ENCODE measurements at regions of chr15 and their contacts with region 1.

Region 1: DNA sequence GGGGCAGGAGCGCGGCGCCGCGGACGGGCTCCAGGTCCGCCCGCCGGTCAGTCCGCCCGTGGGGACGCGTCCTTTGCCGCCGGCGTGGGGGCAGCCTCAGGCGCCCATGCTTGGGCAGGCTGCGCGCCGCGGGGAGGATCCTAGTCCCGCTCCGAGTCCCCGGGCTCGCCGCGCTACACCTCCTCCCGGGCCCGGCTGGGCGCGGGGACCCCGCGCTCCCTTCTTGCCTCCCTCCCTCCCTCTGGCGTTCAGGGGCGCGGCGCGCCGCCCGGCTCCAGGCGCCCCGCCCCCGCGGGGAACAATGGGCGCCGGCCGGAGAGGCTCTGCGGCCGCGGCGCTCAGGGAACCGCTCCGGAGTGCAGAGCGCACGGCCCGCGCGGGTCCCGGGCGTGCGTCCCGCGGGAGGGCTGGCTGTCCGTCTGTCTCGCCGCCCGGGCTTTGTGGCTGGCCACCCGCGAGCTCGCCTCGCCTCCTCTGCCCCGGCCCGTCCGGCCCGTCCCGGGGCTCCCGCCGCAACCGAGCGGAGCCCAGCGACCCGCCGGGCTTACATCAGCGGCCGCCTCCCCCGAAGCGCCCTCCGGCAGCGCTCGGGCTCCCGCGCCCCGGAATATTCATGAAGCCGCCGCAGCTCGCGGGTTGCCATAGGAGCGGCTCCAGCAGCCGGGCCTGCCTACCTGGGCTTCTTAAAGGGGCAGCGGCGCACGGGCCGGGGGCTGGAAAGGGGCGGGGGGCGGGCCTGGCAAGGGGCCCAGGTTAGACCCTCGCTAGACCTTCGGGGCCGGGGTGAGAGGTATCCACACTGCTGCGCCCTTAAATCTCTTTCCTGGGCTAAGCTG is at the start of gene HCN4:
- DNase-seq: no peak
- ATAC-seq: peak; percentile 77
- total RNA-seq, gene HCN4: 21.4 TPM

Region 2: DNA sequence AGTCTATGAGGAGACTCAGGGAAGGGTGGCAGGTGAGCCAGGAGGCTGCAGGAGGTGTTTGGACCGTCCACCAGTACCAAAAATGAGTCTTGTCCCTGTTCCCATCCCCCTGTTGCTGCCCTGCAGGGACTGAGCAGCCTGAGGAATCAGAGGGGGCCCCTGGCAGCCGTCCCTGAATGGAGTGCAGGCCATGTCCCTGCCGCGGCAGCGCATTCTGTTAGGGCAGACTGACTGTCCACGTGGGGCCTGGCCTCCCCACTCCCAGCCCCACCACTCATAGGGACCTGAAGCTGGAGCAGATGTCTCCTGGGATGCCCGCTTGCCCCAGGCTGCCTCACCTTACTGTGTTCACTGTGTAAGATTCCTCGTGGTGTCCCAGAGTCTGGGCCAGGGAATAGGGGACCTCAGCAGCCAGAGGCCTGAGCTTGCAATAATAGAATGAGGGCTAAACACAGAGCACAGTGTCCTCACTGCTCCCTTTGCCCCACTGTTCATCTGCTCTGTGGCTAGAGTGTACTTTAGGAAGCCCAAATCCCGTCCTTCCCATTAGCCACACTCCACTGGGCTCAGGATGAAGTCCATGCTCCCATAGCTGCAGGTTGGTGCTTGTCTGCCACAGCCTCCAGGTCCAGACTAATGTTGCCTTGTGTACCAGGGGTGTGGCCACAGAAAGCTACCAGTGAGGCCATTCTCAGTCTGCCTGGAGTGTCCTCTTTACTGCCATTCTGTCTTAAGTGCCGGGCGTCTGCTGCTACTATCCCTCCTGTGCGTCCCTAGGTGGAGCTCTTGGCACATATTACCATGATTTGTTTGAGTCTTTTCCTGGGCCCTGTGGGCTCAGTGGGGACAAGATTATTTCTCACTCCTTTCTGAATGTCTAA is 62.9 kb before region 1 on chr15:
- intact Hi-C with region 1: loop called (anchors 5 kb)
- DNase-seq: no peak
- ATAC-seq: peak; percentile 79

Region 3: DNA sequence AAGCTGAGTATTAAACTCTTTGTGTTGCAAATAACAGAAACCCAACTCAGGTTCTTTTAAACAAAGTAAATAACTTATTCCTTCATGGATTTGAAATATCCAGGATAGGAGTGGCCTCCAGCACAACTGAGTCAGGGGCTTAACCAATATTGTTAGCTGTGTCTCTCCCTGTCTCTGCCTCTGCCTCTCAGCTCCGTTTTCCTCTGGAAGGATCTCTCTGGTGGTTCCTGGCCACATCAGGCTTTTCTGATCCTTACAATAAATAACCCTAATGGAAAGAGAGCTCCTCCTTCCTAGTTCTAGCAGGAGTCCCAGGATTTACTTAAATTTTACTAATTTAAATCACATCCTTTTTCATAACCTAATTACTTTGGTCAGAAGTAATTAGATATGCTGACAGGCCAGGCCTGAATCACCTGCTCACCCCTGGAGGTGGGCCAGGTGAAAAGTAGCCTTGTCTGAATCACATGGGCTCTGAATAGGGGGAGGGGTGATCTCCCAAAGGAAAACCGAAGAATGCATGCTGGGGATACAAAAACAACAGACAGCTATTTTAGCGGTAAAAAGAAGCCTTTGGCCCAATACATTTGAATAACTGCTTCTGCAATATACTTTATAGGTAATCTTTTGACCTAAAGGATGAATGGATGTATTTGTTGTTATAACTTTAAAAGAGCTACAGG is 149.8 kb after region 1 on chr15:
- intact Hi-C with region 1: loop called (anchors 5 kb)
- DNase-seq: no peak
- ATAC-seq: peak; percentile 49

Measured in Right ventricle myocardium inferior (tissue), 1 donor.